ENCODE measurements at regions of chr14 and their contacts with region 1.

Region 1: GRCh38 chr14:45134051-45134958 is at the start of gene FKBP3:
- DNase-seq: peak; percentile 97
- ATAC-seq: peak; percentile 99
- H3K4me3 ChIP-seq: peak within 1 kb of the TSS; percentile 92 to 97
- H3K27ac ChIP-seq: peak within 1 kb of the TSS; percentile 71 to 83
- H3K4me1 ChIP-seq: peaks cover 0 to 3% of the 10 kb centered on the region in 2 donors
- H3K27me3 ChIP-seq: no peaks in the 10 kb centered on the region
- total RNA-seq, gene FKBP3: 36.2 to 38.8 TPM

Region 2: DNA sequence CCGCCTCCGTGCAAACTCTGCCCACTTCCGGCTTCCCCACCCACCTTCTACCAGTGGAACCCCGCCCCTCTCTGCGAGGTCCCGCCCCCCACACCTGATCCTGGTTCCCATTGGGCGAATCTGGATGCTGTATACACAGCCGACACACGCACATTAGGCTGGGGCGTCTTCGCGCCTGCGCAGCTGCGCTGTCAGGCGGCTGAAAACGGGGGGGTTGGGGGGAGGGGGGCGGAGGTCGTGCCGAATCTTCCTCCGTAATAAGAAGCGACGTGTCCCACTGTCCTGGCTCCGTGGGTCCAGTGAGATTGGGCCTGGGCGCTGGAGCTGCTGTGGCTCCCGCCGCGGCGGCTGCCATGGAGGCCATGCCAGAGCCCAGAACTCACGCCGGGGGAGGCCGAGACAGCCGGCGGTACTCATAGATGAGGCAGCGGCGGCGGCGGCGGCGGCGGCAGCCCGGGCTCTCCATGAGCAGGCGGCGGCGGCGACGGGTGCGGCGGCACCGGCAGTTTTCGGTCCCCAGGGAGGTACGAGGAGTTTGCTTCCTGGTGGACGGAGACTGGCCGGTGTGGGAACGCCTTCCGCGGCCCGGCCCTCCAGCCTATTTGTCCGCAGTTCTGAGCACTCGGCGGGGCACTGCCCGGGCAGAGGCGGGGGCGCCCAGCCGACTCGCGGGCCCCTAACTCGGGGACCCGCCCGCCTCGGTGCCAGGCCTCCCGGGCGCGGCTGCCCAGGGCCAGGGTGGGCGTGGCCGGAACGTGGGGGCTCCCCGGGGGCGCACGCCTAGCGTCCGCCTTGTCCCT is 237.1 kb before region 1 on chr14:
- intact Hi-C with region 1: loop called in 1 of 2 experiments (anchors 2 kb)
- DNase-seq: peak; percentile 98 to 99
- ATAC-seq: peak; percentile 98
- H3K4me3 ChIP-seq: peak overlapping the region; percentile 69 to 89
- H3K27ac ChIP-seq: peak overlapping the region; percentile 91 to 92
- H3K4me1 ChIP-seq: peaks cover 0 to 2% of the 10 kb centered on the region in 2 donors
- H3K27me3 ChIP-seq: no peaks in the 10 kb centered on the region

Region 3: DNA sequence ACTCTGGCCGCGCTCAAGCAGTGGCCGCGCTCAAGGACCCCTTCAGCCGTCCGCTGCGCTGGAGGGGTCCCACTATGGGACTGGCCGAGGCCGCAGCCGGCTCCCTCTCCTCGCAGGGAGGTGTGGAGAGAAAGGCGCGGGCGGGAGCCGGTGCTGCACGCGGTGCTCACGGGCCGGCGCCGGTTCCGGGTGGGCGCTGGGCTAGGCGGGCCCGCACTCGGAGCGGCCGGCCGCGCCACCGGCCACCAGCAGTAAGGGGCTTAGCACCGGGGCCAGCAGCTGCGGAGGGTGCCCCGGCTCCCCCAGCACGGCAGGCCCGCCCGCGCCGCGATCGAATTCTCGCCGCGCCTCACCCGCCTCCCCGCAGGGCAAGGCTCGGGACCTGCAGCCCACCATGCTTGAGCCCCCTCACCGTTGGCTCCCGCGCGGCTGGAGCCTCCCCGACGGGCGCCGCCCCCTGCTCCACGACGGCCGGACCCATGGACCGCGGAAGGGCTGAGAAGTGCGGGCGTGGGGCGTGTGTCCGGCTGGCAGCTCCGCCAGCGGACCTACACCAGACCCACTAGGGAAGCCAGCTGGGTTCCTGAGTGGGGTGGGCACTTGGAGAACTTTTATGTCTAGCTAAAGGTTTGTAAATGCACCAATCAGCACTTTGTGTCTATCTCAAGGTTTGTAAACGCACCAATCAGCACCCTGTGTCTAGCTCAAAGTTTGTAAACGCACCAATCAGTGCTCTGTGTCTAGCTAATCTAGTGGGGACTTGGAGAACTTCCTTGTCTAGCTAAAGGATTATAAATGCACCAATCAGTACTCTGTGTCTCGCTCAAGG is 222.1 kb before region 1 on chr14:
- intact Hi-C with region 1: loop called in 1 of 2 experiments (anchors 10 kb)
- DNase-seq: peak in 1 of 2 donors; percentile 74
- ATAC-seq: peak; percentile 69
- H3K4me3 ChIP-seq: peak overlapping the region; percentile 28 to 32
- H3K27ac ChIP-seq: no peak overlapping the region
- H3K4me1 ChIP-seq: no peaks in the 10 kb centered on the region
- H3K27me3 ChIP-seq: no peaks in the 10 kb centered on the region

Region 4: GRCh38 chr14:44961604-44962333 is 172.5 kb before region 1 on chr14 and contains the starts of genes KLHL28 and TOGARAM1:
- intact Hi-C with region 1: loop called (anchors 5 kb)
- DNase-seq: peak; percentile 97 to 98
- ATAC-seq: peak; percentile 99
- H3K4me3 ChIP-seq: peak within 1 kb of the TSS; percentile 83 to 87
- H3K27ac ChIP-seq: peak within 1 kb of the TSS in 1 of 2 donors; percentile 88
- H3K4me1 ChIP-seq: peaks cover 5 to 6% of the 10 kb centered on the region in 2 donors
- H3K27me3 ChIP-seq: no peaks in the 10 kb centered on the region
- total RNA-seq, gene KLHL28: 17.3 to 18.8 TPM
- total RNA-seq, gene TOGARAM1: 12.4 to 21.4 TPM

Region 5: GRCh38 chr14:45089813-45090212 is 44.5 kb before region 1 on chr14:
- intact Hi-C with region 1: loop called in 1 of 2 experiments (anchors 5 kb)
- DNase-seq: no peak
- ATAC-seq: no peak
- H3K4me3 ChIP-seq: no peak overlapping the region
- H3K27ac ChIP-seq: no peak overlapping the region
- H3K4me1 ChIP-seq: peaks cover 0 to 6% of the 10 kb centered on the region in 2 donors
- H3K27me3 ChIP-seq: no peaks in the 10 kb centered on the region

Region 6: DNA sequence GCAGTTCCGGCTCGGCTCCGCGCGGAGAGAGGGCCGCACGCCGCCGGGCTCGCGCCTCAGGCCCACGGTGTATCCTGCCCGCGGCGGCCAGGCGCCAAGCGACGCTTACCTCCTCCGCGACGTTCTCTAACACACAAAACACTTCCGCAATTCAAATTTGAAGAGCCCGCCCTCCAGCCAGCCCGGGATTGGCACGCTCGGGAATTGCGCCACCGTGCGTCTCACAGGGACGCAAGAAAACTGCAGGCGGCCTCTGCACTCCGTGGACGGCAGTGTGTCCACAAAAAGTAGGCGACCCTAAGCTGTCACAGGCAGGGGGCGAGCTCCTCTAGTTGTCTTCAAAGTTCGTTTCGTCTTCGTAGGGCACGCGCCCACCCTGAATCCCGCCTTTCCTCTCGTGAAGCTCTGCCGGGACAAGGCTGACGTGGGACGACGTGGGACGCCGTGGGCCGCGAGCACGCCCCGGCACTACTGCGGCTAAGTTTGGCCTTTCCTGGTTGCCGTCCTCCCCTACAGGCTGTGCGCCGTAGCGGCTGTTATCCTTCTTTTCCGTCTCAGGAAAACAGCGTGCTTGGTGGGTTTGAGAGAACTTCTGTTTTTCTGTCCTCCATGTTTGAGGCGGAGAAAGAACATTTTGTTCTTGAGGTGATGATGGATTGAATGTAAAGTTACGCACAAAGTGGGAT is 118.9 kb after region 1 on chr14 and contains the start of gene MIS18BP1:
- intact Hi-C with region 1: loop called (anchors 5 kb)
- DNase-seq: peak; percentile 97 to 98
- ATAC-seq: peak; percentile 98
- H3K4me3 ChIP-seq: peak within 1 kb of the TSS; percentile 79 to 83
- H3K27ac ChIP-seq: peak within 1 kb of the TSS; percentile 43 to 91
- H3K4me1 ChIP-seq: no peaks in the 10 kb centered on the region
- H3K27me3 ChIP-seq: no peaks in the 10 kb centered on the region
- total RNA-seq, gene MIS18BP1: 15.5 to 31.4 TPM